Activated CD4-positive, alpha-beta T cell treated with anti-CD3 and anti-CD28 coated beads, Interleukin-2, amount 10 ng/mL, durations not matched to agents 24 days and 14 days (primary cell): ENCODE measurements at regions of chr15 and their contacts with region 1.

Region 1: GRCh38 chr15:72532991-72533601 is 59.0 kb downstream of the ARIH1 start:
- DNase-seq: peak; percentile 64
- H3K4me3 Mint-ChIP-seq: no peak overlapping the region
- H3K27ac Mint-ChIP-seq: no peak overlapping the region
- H3K4me1 Mint-ChIP-seq: peaks cover 17% of the 10 kb centered on the region
- H3K27me3 Mint-ChIP-seq: no peaks in the 10 kb centered on the region

Region 2: DNA sequence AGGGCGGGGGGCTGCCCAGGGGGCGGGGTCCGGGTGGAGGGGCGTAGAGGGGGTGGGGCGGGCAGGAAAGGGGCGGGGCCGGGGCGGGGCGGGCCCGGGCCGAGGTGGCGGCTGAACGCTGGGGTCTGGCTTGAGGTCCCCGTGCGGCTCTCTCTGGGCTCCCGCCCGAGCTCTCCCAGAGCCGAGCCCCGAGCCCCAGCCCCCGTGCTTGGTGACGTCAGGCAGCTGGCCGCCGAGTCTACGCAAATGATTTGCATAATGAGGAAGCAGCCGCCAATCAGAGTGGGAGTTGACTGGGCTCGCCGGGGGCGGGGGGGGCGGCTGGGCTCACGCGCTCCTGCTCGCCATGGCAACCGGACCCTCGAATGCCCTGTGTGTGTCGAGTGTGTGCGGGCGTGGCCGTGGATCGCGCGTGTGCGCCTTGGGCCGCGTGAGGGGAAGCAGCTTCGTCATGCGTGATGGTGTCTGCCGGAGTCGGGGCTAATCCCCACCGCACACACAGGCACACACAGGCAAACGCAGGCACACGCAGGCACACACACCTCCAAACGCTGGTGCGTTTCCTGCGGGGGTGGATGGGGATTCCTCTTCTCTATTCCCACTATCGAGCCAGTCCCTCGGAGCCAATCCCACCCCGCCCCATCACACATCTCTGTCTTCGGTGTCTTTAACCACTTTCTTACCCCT is 213.0 kb before region 1 on chr15 and contains the start of gene CELF6:
- intact Hi-C with region 1: loop called (anchors 10 kb)
- DNase-seq: peak; percentile 92
- H3K4me3 Mint-ChIP-seq: peak within 1 kb of the TSS; percentile 75
- H3K27ac Mint-ChIP-seq: peak within 1 kb of the TSS; percentile 8
- H3K4me1 Mint-ChIP-seq: peaks cover 19% of the 10 kb centered on the region
- H3K27me3 Mint-ChIP-seq: peaks cover 23% of the 10 kb centered on the region
- total RNA-seq, gene CELF6: 0.19 and 0.21 TPM in 2 replicates

Region 3: GRCh38 chr15:72464251-72464650 is 68.8 kb before region 1 on chr15:
- intact Hi-C with region 1: no loop called
- DNase-seq: no peak
- H3K4me3 Mint-ChIP-seq: no peak overlapping the region
- H3K27ac Mint-ChIP-seq: no peak overlapping the region
- H3K4me1 Mint-ChIP-seq: peaks cover 12% of the 10 kb centered on the region
- H3K27me3 Mint-ChIP-seq: no peaks in the 10 kb centered on the region